Naive thymus-derived CD4-positive, alpha-beta T cell (primary cell): ENCODE measurements at regions of chr10 and their contacts with region 1.

Region 1: GRCh38 chr10:14837757-14838581 is at the starts of genes CDNF, HSPA14 and MSANTD7:
- DNase-seq: peak; percentile 98 to 99 (median 99)
- ATAC-seq: peak; percentile 98
- H3K4me3 ChIP-seq: peak within 1 kb of the TSS; percentile 88
- H3K4me3 Mint-ChIP-seq: peak within 1 kb of the TSS; percentile 87 to 98 (median 97)
- H3K27ac ChIP-seq: peak within 1 kb of the TSS; percentile 94
- H3K27ac Mint-ChIP-seq: peak within 1 kb of the TSS; percentile 92 to 99 (median 97)
- H3K4me1 ChIP-seq: peaks cover 15 to 17% of the 10 kb centered on the region in 2 donors
- H3K4me1 Mint-ChIP-seq: peaks cover 14 to 45% (median 32%) of the 10 kb centered on the region in 7 donors
- H3K27me3 ChIP-seq: no peaks in the 10 kb centered on the region
- H3K27me3 Mint-ChIP-seq: no peaks in the 10 kb centered on the region
- total RNA-seq, gene CDNF: 1.0 to 8.4 (median 4.9) TPM
- total RNA-seq, gene HSPA14: 14.1 to 23.8 (median 17.6) TPM
- total RNA-seq, gene MSANTD7: 16.2 to 31.4 (median 21.9) TPM

Region 2: DNA sequence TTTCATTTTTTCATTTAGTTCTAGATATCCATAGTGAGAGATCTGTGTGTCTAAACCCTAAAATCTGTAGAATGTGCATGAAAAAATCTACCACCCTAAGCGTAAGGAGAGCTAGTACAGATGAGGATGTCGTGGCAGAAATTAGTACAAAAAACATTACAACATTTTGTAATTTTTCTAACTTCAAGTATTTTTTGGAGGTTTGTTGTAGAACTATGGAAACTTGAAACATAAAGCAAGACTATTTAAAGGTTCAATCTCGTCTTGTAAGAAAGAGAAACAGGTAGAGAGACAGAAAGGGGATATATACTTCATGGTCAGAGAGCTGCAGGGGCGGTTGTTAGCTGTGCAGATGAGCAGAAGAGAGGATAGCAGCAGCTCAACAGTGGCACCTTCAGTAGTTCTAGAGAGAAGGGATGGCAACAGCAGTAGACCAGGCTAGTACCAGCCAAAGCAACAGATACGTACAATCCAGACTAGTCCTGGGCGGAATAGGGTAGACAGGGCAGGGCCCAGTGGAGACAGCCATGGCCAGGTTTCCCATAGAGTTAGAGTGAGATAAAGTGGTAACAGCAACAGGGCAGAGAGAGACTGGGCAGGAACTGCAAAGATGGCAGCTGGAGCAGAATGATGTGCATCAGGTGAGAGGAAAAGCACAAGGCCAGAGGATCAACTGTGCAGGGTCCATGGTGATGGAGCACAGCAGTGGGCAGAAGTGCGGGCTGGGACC is 652.5 kb before region 1 on chr10:
- CTCF ChIA-PET with region 1: no interaction called
- POLR2A ChIA-PET with region 1: no interaction called
- intact Hi-C with region 1: loop called in 1 of 2 experiments (anchors 5 kb)
- DNase-seq: peak in 4 of 9 donors; percentile 30 to 75 (median 74)
- ATAC-seq: peak; percentile 87
- H3K4me3 ChIP-seq: peak overlapping the region; percentile 37
- H3K4me3 Mint-ChIP-seq: peak overlapping the region; percentile 18 to 88 (median 77)
- H3K27ac ChIP-seq: peak overlapping the region; percentile 61
- H3K27ac Mint-ChIP-seq: peak overlapping the region; percentile 88 to 98 (median 95)
- H3K4me1 ChIP-seq: peaks cover 0 to 12% of the 10 kb centered on the region in 2 donors
- H3K4me1 Mint-ChIP-seq: peaks cover 12 to 35% (median 22%) of the 10 kb centered on the region in 7 donors
- H3K27me3 ChIP-seq: peaks cover 0 to 5% of the 10 kb centered on the region in 2 donors
- H3K27me3 Mint-ChIP-seq: peaks cover 17 to 69% (median 21%) of the 10 kb centered on the region in 5 donors

Region 3: GRCh38 chr10:14543046-14543903 is 294.7 kb before region 1 on chr10:
- CTCF ChIA-PET with region 1: interaction called, 6 read pairs
- POLR2A ChIA-PET with region 1: interaction called, 3 read pairs
- intact Hi-C with region 1: loop called (anchors 5 kb)
- DNase-seq: peak in 7 of 9 donors; percentile 60 to 81 (median 73)
- ATAC-seq: peak; percentile 86
- H3K4me3 ChIP-seq: peak overlapping the region; percentile 28
- H3K4me3 Mint-ChIP-seq: peak overlapping the region; percentile 46 to 82 (median 76)
- H3K27ac ChIP-seq: peak overlapping the region; percentile 72
- H3K27ac Mint-ChIP-seq: peak overlapping the region; percentile 73 to 96 (median 84)
- H3K4me1 ChIP-seq: peaks cover 23 to 42% of the 10 kb centered on the region in 2 donors
- H3K4me1 Mint-ChIP-seq: peaks cover 57 to 97% (median 94%) of the 10 kb centered on the region in 7 donors
- H3K27me3 ChIP-seq: no peaks in the 10 kb centered on the region
- H3K27me3 Mint-ChIP-seq: no peaks in the 10 kb centered on the region

Region 4: DNA sequence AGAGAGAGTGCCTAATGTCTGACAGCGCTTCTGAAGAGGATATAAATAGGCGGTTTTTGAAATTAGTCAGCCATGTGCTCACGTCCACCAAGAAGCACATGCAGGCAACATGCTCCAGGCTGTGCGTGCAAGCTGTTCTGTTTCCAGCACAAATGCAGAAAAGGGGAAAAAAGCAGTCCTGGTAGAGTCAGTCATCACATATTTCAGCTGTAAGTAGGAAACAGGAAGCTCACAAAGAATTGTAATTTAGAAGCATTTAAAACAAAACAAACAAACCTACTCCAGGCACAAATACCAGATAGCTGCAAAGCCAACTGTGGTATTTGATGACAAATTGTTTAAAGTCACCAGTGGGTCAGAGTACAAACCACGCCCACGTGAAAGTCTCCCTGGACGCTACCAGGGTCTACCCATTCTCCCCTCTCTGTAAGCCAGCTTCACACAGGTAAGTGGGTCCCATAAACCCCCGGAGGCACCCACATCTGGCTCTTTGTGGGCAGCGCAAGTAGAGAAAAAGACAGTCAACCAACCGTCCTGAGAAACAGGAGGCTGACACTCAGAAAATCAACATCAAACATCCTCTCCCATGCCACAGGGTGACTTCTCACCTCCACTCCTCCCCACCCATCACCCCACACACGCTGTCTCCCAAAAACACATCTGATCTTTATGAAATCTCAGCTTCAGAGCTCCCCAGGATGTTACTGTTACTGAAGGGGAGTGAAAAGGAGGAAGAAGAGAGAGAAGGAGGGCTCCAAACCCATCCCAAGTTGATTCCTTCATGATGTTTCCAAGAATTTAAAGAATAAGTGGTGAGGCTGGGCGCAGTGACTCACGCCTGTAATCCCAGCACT is 249.7 kb before region 1 on chr10:
- CTCF ChIA-PET with region 1: interaction called, 3 read pairs
- POLR2A ChIA-PET with region 1: interaction called, 9 read pairs
- intact Hi-C with region 1: loop called (anchors 5 kb)
- DNase-seq: peak in 6 of 9 donors; percentile 24 to 60 (median 44)
- ATAC-seq: peak; percentile 20
- H3K4me3 ChIP-seq: peak overlapping the region; percentile 31
- H3K4me3 Mint-ChIP-seq: peak overlapping the region; percentile 76 to 88 (median 84)
- H3K27ac ChIP-seq: peak overlapping the region; percentile 83
- H3K27ac Mint-ChIP-seq: peak overlapping the region; percentile 96 to 100 (median 99)
- H3K4me1 ChIP-seq: peaks cover 73 to 76% of the 10 kb centered on the region in 2 donors
- H3K4me1 Mint-ChIP-seq: peaks cover 52 to 94% (median 93%) of the 10 kb centered on the region in 7 donors
- H3K27me3 ChIP-seq: no peaks in the 10 kb centered on the region
- H3K27me3 Mint-ChIP-seq: no peaks in the 10 kb centered on the region

Region 5: GRCh38 chr10:14878266-14879054 is 40.5 kb after region 1 on chr10 and contains the start of gene SUV39H2:
- CTCF ChIA-PET with region 1: interaction called, 3 read pairs
- POLR2A ChIA-PET with region 1: interaction called, 28 read pairs
- intact Hi-C with region 1: loop called (anchors 1 kb)
- DNase-seq: peak; percentile 81 to 97 (median 87)
- ATAC-seq: peak; percentile 93
- H3K4me3 ChIP-seq: peak within 1 kb of the TSS; percentile 92
- H3K4me3 Mint-ChIP-seq: peak within 1 kb of the TSS; percentile 92 to 97 (median 94)
- H3K27ac ChIP-seq: peak within 1 kb of the TSS; percentile 87
- H3K27ac Mint-ChIP-seq: peak within 1 kb of the TSS; percentile 71 to 94 (median 91)
- H3K4me1 ChIP-seq: peaks cover 4 to 7% of the 10 kb centered on the region in 2 donors
- H3K4me1 Mint-ChIP-seq: peaks cover 7 to 46% (median 41%) of the 10 kb centered on the region in 7 donors
- H3K27me3 ChIP-seq: no peaks in the 10 kb centered on the region
- H3K27me3 Mint-ChIP-seq: no peaks in the 10 kb centered on the region
- total RNA-seq, gene SUV39H2: 2.4 to 25.0 (median 6.8) TPM

Region 6: GRCh38 chr10:14959276-14960057 is 121.5 kb after region 1 on chr10 and contains the start of gene MEIG1:
- CTCF ChIA-PET with region 1: no interaction called
- POLR2A ChIA-PET with region 1: interaction called, 6 read pairs
- intact Hi-C with region 1: loop called (anchors 1 kb)
- DNase-seq: peak; percentile 82 to 99 (median 90)
- ATAC-seq: peak; percentile 93
- H3K4me3 ChIP-seq: peak within 1 kb of the TSS; percentile 97
- H3K4me3 Mint-ChIP-seq: peak within 1 kb of the TSS; percentile 91 to 99 (median 96)
- H3K27ac ChIP-seq: peak within 1 kb of the TSS; percentile 81
- H3K27ac Mint-ChIP-seq: peak within 1 kb of the TSS; percentile 93 to 98 (median 96)
- H3K4me1 ChIP-seq: peaks cover 8 to 10% of the 10 kb centered on the region in 2 donors
- H3K4me1 Mint-ChIP-seq: peaks cover 6 to 42% (median 34%) of the 10 kb centered on the region in 7 donors
- H3K27me3 ChIP-seq: no peaks in the 10 kb centered on the region
- H3K27me3 Mint-ChIP-seq: no peaks in the 10 kb centered on the region
- total RNA-seq, gene MEIG1: 1.2 to 1.9 TPM in 2 of 5 experiments, not detected in the others

Region 7: DNA sequence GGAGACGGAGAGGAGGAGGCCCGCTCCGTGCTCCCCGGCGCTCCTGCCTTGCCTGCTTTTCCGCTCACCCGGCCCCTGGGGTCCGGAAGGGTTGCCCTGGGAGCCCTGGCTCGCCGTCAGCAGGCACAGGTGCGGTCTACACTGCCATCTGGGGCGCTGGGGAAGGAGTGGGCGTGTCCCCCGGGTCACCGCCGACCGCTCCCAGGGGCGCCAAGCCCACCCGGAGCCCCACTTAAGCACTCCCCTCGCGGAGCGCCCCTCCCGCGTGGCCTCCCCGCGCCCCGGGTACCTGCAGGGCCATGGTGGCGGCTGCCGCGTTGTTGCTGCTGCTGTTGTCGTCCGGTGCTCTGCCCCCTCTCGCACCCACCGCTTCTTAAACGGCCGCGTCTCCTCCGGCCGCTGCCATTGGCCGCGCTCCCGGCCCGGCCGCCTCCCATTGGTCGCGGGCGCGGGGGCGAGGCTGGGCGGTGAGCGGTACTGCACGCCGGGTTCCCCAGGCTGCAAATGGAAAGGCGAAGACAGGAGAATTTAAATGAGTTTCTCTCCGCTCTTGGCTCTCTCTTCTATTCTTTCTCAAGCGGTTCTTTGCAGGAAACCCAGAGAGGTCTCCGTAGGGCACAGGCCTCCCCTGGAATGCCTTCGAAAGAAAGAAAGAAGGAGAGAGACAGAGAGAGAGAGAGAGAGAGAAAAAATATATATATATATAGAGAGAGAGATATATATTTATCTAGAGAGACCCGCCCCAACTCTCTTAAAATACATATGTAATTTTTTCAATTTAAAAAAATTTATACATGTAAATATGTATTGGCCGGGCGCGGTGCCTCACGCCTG is 250.7 kb after region 1 on chr10 and contains the start of gene ACBD7:
- CTCF ChIA-PET with region 1: no interaction called
- POLR2A ChIA-PET with region 1: no interaction called
- intact Hi-C with region 1: no loop called
- DNase-seq: peak; percentile 74 to 87 (median 78)
- ATAC-seq: peak; percentile 98
- H3K4me3 ChIP-seq: peak within 1 kb of the TSS; percentile 71
- H3K4me3 Mint-ChIP-seq: peak within 1 kb of the TSS; percentile 69 to 82 (median 77)
- H3K27ac ChIP-seq: no peak within 1 kb of the TSS
- H3K27ac Mint-ChIP-seq: peak within 1 kb of the TSS in 2 of 9 donors; percentile 29 to 45
- H3K4me1 ChIP-seq: no peaks in the 10 kb centered on the region
- H3K4me1 Mint-ChIP-seq: peaks cover 0 to 6% (median 0%) of the 10 kb centered on the region in 7 donors
- H3K27me3 ChIP-seq: no peaks in the 10 kb centered on the region
- H3K27me3 Mint-ChIP-seq: peaks cover 0 to 19% (median 0%) of the 10 kb centered on the region in 5 donors
- total RNA-seq, gene ACBD7: 0.27 to 1.5 (median 0.60) TPM in 4 of 5 experiments, not detected in the other

Region 8: GRCh38 chr10:15223174-15223573 is 385.2 kb after region 1 on chr10:
- CTCF ChIA-PET with region 1: no interaction called
- POLR2A ChIA-PET with region 1: no interaction called
- intact Hi-C with region 1: no loop called
- DNase-seq: no peak
- ATAC-seq: no peak
- H3K4me3 ChIP-seq: no peak overlapping the region
- H3K4me3 Mint-ChIP-seq: no peak overlapping the region
- H3K27ac ChIP-seq: no peak overlapping the region
- H3K27ac Mint-ChIP-seq: no peak overlapping the region
- H3K4me1 ChIP-seq: no peaks in the 10 kb centered on the region
- H3K4me1 Mint-ChIP-seq: peaks cover 0 to 7% (median 0%) of the 10 kb centered on the region in 7 donors
- H3K27me3 ChIP-seq: no peaks in the 10 kb centered on the region
- H3K27me3 Mint-ChIP-seq: peaks cover 0 to 2% (median 0%) of the 10 kb centered on the region in 5 donors